CD4-positive, alpha-beta T cell (primary cell): ENCODE measurements at regions of chr15 and their contacts with region 1.

Region 1: DNA sequence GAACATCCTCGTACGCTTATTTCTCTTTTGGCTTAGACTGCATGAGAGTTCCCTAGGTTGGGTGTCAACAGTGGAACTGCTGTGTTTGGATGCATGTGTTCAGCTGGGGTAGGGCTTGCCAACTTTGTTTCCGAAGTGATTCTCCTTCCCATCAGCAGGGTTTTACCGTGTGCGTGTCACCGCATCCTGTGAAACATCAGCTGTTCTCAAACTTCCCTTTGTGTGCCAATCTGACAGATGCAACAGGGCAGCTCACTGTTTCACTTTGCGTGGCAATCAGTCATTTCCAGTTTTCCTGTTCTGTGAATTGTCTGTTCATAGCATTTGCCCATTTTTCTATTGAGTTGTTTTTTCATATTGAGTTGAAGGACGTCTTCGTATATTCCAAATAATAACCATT is 218.8 kb downstream of the VPS13C start:
- DNase-seq: peak in 2 of 14 experiments; percentile 34 to 40
- ATAC-seq: no peak
- H3K4me3 ChIP-seq: no peak overlapping the region
- H3K4me3 Mint-ChIP-seq: no peak overlapping the region
- H3K27ac ChIP-seq: no peak overlapping the region
- H3K27ac Mint-ChIP-seq: no peak overlapping the region
- H3K4me1 ChIP-seq: peaks cover 3% of the 10 kb centered on the region
- H3K4me1 Mint-ChIP-seq: no peaks in the 10 kb centered on the region
- H3K27me3 ChIP-seq: peaks cover 0 to 22% of the 10 kb centered on the region in 2 experiments
- H3K27me3 Mint-ChIP-seq: peaks cover 50% of the 10 kb centered on the region
- CTCF ChIP-seq: no peak

Region 2: DNA sequence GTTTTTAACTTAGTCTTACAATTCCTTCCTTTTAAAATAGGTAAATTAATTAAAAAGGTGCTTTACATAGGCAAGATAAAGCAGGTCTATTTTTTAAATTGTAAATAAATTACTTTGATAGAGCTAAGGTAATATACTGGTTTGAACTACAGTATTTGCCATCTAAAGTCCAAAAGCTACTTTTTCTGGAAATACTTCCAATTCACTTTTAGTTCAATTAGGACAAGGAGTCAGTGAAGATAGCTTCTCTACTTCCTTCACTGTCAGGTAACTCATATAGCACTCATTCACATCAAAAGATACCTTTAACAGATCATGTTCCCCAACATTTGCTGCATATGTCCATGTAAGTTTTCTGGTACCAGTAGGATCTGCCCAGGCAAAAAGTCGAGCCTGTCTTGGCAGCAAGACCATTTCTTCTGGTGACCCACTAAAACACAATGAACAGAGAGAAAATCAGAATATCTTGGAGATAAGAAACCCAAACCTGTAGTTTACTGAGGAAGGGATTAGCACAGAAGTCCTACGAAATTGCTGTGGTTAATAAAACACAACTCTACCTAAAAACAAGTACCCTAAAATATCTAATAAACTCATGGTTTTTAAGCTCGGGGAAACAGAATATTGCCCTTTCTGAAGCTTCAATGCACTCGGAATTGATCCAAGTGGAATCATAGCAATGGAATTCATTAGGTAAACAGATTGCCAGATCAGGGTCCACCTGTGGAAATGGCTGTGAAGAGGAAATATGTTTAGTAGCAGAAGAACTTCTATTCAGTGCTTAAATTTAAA is 65.7 kb after region 1 on chr15:
- CTCF ChIA-PET with region 1: no interaction called
- POLR2A ChIA-PET with region 1: no interaction called
- intact Hi-C with region 1: loop called in 1 of 2 experiments (anchors 10 kb)
- DNase-seq: no peak
- ATAC-seq: no peak
- H3K4me3 ChIP-seq: no peak overlapping the region
- H3K4me3 Mint-ChIP-seq: no peak overlapping the region
- H3K27ac ChIP-seq: no peak overlapping the region
- H3K27ac Mint-ChIP-seq: no peak overlapping the region
- H3K4me1 ChIP-seq: no peaks in the 10 kb centered on the region
- H3K4me1 Mint-ChIP-seq: no peaks in the 10 kb centered on the region
- H3K27me3 ChIP-seq: no peaks in the 10 kb centered on the region
- H3K27me3 Mint-ChIP-seq: no peaks in the 10 kb centered on the region
- CTCF ChIP-seq: no peak